ENCODE measurements at regions of chr19 and their contacts with region 1.

Region 1: DNA sequence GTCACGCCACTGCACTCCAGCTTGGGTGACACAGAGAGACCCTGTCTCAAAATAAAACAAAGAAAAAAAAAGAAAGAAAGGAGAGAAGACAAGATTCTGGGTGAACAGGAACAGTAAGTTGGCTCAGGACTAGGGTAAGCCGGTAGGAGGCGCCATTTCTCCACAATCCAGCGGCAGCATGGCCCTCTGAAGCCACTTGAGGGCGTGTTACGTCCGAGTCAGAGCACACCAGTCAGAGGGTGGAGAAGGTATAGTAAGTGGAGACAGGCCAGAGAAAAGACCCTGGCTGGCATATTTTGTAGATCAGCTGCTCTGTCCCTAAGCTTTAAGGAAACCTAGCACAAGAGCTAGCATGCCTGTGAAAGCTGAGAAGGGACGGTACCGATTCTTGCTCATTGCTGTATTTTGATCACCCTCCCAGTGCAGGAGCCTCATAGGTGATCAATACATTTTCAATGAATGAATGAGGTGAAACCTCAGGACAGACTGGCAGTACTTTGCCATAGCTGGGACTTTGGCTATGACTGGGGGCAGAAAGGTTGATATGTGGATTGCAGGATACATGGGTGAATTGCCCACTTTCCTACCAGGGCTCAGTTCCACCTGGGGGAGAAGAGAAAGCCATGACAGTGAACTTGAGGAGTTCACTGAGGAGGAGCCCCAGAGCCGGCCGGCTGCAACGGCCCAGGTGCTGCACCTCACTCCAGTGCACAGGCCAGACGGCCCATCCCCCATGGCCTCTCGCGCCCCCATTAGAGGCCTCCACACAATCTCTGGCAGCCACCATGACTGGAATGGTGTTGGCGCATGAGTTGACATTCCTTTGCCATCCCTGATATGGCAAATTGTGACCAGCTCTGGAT is 23.5 kb downstream of the POU2F2 start:
- DNase-seq: peak; percentile 88
- H3K4me3 ChIP-seq: no peak overlapping the region
- H3K27ac ChIP-seq: no peak overlapping the region
- H3K4me1 ChIP-seq: peaks cover 4% of the 10 kb centered on the region
- H3K27me3 ChIP-seq: no peaks in the 10 kb centered on the region
- CTCF ChIP-seq: peak; percentile 100

Region 2: DNA sequence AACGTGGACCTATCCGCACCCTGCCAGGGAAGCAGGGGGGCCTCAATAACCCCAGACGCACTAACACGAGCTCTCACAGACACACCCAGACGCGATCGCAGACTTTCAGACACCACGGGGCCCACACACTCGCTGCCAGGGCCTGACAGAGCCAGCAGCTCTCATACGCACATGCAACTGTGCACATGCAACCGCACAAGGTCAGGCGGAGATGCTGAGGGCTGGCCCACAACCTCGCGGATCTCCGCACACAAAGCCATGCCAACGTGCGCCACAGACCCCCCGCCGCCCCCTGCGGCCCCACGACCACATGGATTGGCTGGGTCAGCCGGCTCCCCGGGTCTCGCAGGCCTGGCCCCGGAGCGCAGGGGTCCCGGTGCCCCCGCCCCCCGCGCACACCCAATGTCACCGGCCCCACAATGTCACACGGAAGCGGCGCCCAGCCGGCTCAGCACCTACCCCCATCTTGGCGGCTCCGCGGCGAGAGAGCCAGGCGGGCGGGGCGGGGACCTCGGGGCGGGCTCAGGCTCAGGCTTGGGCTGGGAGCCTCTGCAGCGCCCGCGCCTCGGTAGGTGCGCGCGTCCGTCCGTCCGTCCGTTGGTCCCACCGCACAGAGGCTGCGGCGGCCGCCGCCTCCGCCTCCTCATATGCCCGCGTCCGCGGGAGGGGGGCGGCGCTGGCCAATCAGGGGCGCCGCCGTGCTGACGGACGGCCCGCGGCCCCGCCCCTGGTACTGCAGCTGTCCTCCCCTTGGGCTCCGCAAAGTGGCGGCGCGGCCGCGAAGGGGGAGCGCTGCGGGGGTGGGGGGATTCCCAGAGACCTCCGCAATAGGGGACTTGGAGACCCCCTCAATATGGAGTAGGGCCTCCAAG is 114.9 kb before region 1 on chr19 and contains the start of gene ATP1A3:
- CTCF ChIA-PET with region 1: no interaction called
- POLR2A ChIA-PET with region 1: no interaction called
- intact Hi-C with region 1: no loop called
- DNase-seq: peak; percentile 80
- H3K4me3 ChIP-seq: peak within 1 kb of the TSS; percentile 55
- H3K27ac ChIP-seq: no peak within 1 kb of the TSS
- H3K4me1 ChIP-seq: peaks cover 12% of the 10 kb centered on the region
- H3K27me3 ChIP-seq: peaks cover 6% of the 10 kb centered on the region
- CTCF ChIP-seq: no peak
- total RNA-seq, gene ATP1A3: 8.5 and 9.0 TPM in 2 replicates

Region 3: GRCh38 chr19:42081584-42082203 is 27.1 kb before region 1 on chr19:
- CTCF ChIA-PET with region 1: no interaction called
- POLR2A ChIA-PET with region 1: no interaction called
- intact Hi-C with region 1: no loop called
- DNase-seq: peak; percentile 47
- H3K4me3 ChIP-seq: no peak overlapping the region
- H3K27ac ChIP-seq: no peak overlapping the region
- H3K4me1 ChIP-seq: peaks cover 11% of the 10 kb centered on the region
- H3K27me3 ChIP-seq: no peaks in the 10 kb centered on the region
- CTCF ChIP-seq: peak; percentile 49

Region 4: DNA sequence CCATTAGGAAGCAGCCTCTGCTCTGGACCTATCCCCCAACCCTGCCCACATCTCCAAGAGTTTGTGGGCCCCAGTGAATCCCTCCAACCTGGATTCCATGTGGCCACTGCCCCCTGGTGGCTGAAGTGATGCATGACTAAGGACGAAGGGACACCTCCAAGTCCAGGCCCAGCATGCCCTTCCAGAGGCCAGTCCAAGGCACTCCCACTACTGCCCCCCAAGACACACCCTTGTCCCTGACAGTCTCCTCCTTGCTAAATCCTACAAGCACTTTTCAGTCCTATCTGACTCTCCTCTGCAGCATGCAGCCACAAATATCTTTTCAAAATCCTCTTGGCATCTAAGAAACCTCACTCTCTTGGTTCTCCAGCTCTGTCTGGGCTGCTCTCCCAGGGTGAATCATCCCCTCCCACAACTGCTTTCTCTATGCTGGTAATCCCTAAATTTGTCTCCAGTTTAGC is 75.7 kb after region 1 on chr19:
- CTCF ChIA-PET with region 1: interaction called, 3 read pairs
- POLR2A ChIA-PET with region 1: no interaction called
- intact Hi-C with region 1: loop called (anchors 1 kb)
- DNase-seq: peak; percentile 82
- H3K4me3 ChIP-seq: no peak overlapping the region
- H3K27ac ChIP-seq: no peak overlapping the region
- H3K4me1 ChIP-seq: no peaks in the 10 kb centered on the region
- H3K27me3 ChIP-seq: peaks cover 7% of the 10 kb centered on the region
- CTCF ChIP-seq: peak; percentile 93

Region 5: GRCh38 chr19:42325273-42325895 is 216.6 kb after region 1 on chr19 and contains the start of gene MEGF8:
- CTCF ChIA-PET with region 1: no interaction called
- POLR2A ChIA-PET with region 1: no interaction called
- intact Hi-C with region 1: loop called (anchors 5 kb)
- DNase-seq: peak; percentile 100
- H3K4me3 ChIP-seq: peak within 1 kb of the TSS; percentile 88
- H3K27ac ChIP-seq: peak within 1 kb of the TSS; percentile 79
- H3K4me1 ChIP-seq: peaks cover 8% of the 10 kb centered on the region
- H3K27me3 ChIP-seq: peaks cover 9% of the 10 kb centered on the region
- CTCF ChIP-seq: peak; percentile 98
- total RNA-seq, gene MEGF8: 28.5 and 33.6 TPM in 2 replicates

Region 6: DNA sequence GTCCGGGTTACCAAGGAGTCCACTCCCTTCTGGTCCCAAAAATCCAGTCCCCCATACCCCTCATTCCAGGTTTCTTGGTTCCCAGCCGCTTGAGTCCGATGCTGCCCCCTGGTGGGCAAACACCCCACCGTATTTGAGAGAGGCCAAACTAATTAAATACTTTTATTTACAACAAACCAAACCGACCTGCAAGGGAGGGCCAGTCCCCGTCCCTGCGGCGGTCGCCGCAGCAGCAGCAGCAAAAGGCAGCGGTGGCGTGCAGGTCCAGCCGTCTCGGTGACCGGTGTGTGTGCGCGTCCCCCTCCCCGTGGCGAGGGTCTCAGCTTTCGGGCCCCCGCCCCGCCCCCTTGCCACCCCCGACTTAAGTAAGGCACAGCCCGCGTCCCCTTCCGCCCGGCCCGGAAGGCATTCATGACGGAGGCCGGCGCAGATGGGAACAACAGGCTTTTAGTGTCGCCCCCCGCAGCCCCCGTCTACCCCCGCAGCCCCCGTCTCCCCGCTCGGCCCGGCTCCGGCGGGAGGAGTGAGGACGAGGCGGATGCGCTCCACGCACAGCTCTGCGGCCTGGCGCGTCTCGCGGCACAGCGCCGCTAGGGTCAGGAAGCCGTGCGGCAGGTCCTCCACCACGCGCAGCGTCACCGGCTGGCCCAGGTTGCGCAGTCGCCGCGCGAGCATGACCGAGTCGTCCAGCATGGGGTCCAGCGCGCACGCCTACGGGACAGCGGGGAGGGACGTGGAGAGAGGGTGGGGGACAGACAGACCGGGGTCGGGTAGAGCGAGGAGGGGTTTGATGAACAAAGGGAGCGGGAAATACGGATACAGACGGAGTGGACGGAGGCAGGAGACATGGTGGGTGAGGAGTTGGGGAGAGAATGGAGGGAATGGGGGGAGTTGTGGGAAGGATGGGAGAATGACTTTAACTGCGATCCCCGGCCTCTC is 292.9 kb after region 1 on chr19:
- CTCF ChIA-PET with region 1: no interaction called
- POLR2A ChIA-PET with region 1: no interaction called
- intact Hi-C with region 1: loop called (anchors 5 kb)
- DNase-seq: peak; percentile 86
- H3K4me3 ChIP-seq: peak overlapping the region; percentile 55
- H3K27ac ChIP-seq: no peak overlapping the region
- H3K4me1 ChIP-seq: peaks cover 6% of the 10 kb centered on the region
- H3K27me3 ChIP-seq: no peaks in the 10 kb centered on the region
- CTCF ChIP-seq: peak; percentile 90

Region 7: GRCh38 chr19:42440357-42441048 is 331.7 kb after region 1 on chr19:
- CTCF ChIA-PET with region 1: interaction called, 3 read pairs
- POLR2A ChIA-PET with region 1: no interaction called
- intact Hi-C with region 1: loop called (anchors 5 kb)
- DNase-seq: peak; percentile 87
- H3K4me3 ChIP-seq: no peak overlapping the region
- H3K27ac ChIP-seq: no peak overlapping the region
- H3K4me1 ChIP-seq: no peaks in the 10 kb centered on the region
- H3K27me3 ChIP-seq: no peaks in the 10 kb centered on the region
- CTCF ChIP-seq: peak; percentile 98

Measured in A673 (cell line).